Endothelial cell of umbilical vein (primary cell): ENCODE measurements at regions of chr11 and their contacts with region 1.

Region 1: GRCh38 chr11:34890812-34891211 is 25.4 kb downstream of the APIP start:
- DNase-seq: peak; percentile 58
- H3K4me3 ChIP-seq: no peak overlapping the region
- H3K27ac ChIP-seq: no peak overlapping the region
- H3K4me1 ChIP-seq: no peaks in the 10 kb centered on the region
- H3K27me3 ChIP-seq: no peaks in the 10 kb centered on the region
- CTCF ChIP-seq: peak in 1 of 2 donors; percentile 12
- POLR2A ChIP-seq: no peak

Region 2: DNA sequence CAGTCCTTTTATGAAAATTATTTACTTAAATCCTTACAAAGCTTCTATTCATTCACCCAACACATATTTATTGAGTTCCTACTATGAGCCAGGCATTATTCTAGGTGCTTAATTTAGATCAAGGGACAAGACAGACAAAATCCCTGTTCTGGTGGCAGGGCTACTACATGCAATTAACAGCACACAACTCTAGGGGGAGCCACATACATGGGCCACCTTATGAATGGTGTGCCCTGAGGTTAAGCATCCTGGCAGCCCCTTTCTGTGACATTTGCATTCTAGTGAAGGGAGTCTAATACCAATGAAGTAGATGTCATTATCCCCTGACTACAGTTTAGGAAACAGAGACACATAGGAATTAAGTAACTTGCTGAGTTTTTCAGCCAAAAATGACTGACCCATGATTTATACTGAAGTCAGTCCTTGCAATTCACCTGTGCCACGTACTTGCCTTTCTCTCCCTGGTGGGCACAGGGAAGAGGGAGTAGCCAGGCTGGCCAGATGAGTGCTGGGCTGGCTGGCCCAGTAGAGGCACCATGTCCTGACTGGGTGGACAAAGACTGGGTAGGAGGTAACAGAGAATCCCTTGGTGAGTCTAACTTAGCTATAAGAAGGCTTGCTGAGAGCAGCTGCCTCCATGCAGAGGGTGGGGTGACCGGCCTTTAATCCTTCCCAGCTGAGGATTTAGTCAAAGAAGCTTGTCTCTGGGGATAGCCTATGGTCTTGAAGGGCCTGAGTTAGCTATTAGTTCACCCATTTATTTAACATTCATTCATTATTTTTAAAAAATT is 325.2 kb before region 1 on chr11:
- CTCF ChIA-PET with region 1: interaction called, 6 read pairs
- POLR2A ChIA-PET with region 1: no interaction called
- dilution Hi-C with region 1: no loop called
- intact Hi-C with region 1: loop called (anchors 1 kb)
- DNase-seq: peak; percentile 1
- H3K4me3 ChIP-seq: no peak overlapping the region
- H3K27ac ChIP-seq: no peak overlapping the region
- H3K4me1 ChIP-seq: no peaks in the 10 kb centered on the region
- H3K27me3 ChIP-seq: peaks cover 2 to 6% of the 10 kb centered on the region in 2 experiments
- CTCF ChIP-seq: peak; percentile 34 to 37
- POLR2A ChIP-seq: no peak

Region 3: GRCh38 chr11:34936945-34937629 is 46.3 kb after region 1 on chr11:
- CTCF ChIA-PET with region 1: no interaction called
- POLR2A ChIA-PET with region 1: no interaction called
- dilution Hi-C with region 1: no loop called
- intact Hi-C with region 1: no loop called
- DNase-seq: no peak
- H3K4me3 ChIP-seq: no peak overlapping the region
- H3K27ac ChIP-seq: no peak overlapping the region
- H3K4me1 ChIP-seq: no peaks in the 10 kb centered on the region
- H3K27me3 ChIP-seq: no peaks in the 10 kb centered on the region
- CTCF ChIP-seq: no peak
- POLR2A ChIP-seq: no peak

Region 4: DNA sequence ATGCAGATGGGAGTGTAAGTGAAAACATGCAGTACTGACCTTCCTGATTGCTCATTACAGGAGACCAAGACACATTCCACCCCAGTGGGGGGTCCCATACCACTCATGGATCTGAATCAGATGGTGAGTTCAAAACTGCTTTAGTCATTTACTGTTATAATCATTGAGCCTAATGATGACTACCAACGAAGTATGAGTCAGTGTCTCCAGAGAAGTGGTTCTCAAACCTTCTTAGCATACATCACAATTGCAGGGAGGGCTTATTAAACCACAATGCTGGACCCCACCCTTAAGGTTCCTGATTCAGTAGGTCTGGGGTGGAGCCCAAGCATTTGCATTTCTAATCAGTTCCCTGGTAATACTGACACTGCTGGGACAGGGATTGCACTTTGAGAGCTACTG is 324.0 kb after region 1 on chr11:
- CTCF ChIA-PET with region 1: no interaction called
- POLR2A ChIA-PET with region 1: no interaction called
- dilution Hi-C with region 1: no loop called
- intact Hi-C with region 1: no loop called
- DNase-seq: peak; percentile 54
- H3K4me3 ChIP-seq: no peak overlapping the region
- H3K27ac ChIP-seq: peak overlapping the region; percentile 24
- H3K4me1 ChIP-seq: peaks cover 9% of the 10 kb centered on the region
- H3K27me3 ChIP-seq: no peaks in the 10 kb centered on the region
- CTCF ChIP-seq: no peak
- POLR2A ChIP-seq: no peak